Ascending aorta (tissue), 2 donors: ENCODE measurements at regions of chr1 and their contacts with region 1.

Region 1: DNA sequence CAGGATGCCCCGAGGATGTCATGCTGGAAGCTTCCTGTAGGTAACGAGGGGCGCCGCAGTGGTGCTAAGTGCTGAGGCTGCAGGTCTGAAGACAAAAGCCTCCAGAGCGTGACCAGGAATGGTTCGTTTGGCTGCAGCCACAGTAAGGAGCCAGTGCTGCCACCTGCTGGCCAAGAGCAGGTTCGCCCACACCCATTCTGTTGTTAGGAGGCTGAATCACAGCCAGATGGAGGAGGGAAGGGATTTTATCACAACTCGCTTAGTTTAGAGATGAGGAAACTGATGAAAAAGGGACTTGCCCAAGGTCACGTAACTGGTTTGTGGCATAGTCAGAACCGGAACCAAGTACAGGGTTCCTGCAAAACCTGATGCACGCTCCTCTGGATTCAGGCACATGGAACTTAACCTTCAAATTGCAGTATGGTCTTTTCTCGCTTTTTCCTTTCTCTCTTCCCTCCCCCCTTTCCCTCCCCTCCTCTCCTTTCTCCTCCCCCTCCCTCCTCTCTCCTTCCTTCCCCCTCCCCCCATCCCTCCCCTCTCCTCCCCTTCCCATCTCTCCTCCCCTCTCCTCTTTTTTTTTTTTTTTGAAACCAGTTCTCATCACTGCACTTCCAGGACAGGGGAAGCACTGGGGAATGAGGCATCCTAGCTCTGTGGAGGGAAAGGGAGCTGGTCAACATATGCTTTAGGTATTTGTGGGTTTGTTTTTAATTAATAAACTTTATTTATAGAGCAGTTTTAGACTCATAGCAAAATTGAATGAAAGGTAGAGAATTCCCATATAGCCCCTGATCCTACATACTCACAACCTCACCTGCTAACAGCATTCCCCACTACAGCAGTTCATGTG is 81.8 kb downstream of the MPZL1 start:
- DNase-seq: peak; percentile 77 to 97
- H3K4me3 ChIP-seq: no peak overlapping the region
- H3K27ac ChIP-seq: no peak overlapping the region
- H3K4me1 ChIP-seq: peaks cover 0 to 2% of the 10 kb centered on the region in 2 donors
- H3K27me3 ChIP-seq: no peaks in the 10 kb centered on the region
- CTCF ChIP-seq: peak; percentile 91 to 96 (median 91)

Region 2: DNA sequence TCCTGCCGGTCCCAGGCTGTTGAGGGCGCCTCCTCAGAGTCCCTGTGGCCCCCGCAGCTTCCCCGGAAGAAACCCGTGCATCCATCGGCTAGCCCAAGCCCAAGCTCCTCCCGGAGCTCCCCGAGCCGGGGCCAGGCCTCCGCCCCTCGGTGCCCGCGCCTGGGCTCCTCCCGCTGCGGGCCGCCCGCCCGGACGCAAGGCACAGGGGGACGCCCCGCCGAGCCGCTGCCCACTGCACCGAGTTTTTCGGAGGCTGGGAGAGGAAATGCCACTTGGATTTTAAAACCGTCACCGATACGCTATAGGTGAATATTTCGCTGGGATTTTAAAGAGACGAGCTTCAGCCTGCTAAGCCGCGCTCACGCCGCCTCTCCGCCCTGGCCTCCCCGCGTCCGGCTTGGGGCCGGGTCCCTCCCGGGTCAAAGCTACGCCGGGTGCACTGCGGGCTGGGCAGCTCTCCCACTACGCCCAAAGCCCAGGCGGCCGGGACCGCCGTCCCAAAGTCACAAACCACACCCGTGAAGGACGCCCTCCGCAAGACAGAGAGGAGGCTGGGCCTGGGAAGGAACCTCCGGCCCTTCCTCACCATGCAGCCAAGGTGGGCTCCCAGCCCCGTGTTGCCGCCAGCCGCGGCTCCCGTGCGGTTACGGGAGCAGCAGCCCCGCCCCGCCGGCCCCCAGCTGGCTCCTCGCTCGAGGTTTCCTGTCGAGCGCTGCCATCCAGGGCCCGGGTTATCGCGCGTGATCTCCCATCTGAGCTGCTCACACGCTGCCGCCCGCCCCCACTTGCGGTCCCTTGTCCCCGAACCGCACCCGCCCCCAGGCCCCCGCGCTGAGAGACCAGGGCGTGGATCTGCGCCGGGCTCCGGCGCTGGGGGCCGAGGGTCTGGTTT is 348.4 kb before region 1 on chr1:
- intact Hi-C with region 1: loop called (anchors 10 kb)
- DNase-seq: peak in 1 of 2 donors; percentile 84
- H3K4me3 ChIP-seq: peak overlapping the region; percentile 82 to 96
- H3K27ac ChIP-seq: peak overlapping the region; percentile 88 to 91
- H3K4me1 ChIP-seq: peaks cover 0 to 4% of the 10 kb centered on the region in 2 donors
- H3K27me3 ChIP-seq: no peaks in the 10 kb centered on the region
- CTCF ChIP-seq: no peak

Region 3: DNA sequence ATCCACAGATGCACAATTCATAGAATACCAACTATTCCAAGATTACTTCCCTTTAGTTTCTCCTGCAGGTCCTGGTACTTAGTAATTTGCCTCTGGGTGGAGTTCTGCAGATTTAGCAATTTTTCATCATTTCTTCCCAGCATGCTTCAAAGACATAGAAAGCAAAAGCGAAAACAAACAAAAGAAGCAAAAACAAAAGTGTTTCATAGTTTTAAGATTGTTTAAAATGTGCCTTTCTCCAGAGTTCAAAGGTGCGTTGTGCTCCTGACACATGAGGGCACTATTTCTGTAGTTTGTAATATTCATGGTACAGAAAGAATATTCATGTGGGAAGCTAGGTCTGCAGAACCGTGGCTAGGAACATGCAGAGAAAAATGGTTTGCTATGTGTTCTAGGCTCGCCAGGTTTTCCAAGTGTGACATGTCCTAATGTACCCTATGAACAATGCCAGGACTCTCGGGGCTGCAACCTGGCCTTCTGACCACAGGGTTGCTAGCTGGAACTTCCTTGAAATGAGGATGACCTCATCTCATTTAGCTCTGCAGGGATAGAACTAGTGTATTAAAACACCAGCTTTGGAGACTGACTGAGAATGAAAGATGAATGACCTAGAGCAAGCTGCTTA is 203.5 kb before region 1 on chr1:
- intact Hi-C with region 1: loop called (anchors 5 kb)
- DNase-seq: no peak
- H3K4me3 ChIP-seq: no peak overlapping the region
- H3K27ac ChIP-seq: no peak overlapping the region
- H3K4me1 ChIP-seq: no peaks in the 10 kb centered on the region
- H3K27me3 ChIP-seq: no peaks in the 10 kb centered on the region
- CTCF ChIP-seq: peak; percentile 37 to 62 (median 38)

Region 4: GRCh38 chr1:167721617-167722151 is 81.9 kb before region 1 on chr1 and contains the start of gene MPZL1:
- intact Hi-C with region 1: loop called (anchors 1 kb)
- DNase-seq: peak; percentile 71 to 98
- H3K4me3 ChIP-seq: peak within 1 kb of the TSS; percentile 86 to 98
- H3K27ac ChIP-seq: peak within 1 kb of the TSS; percentile 89 to 94
- H3K4me1 ChIP-seq: peaks cover 3 to 25% of the 10 kb centered on the region in 2 donors
- H3K27me3 ChIP-seq: no peaks in the 10 kb centered on the region
- CTCF ChIP-seq: no peak
- total RNA-seq, gene MPZL1: 58.9 TPM

Region 5: GRCh38 chr1:167819849-167820683 is 16.5 kb after region 1 on chr1:
- intact Hi-C with region 1: loop called (anchors 2 kb)
- DNase-seq: peak; percentile 70 to 93
- H3K4me3 ChIP-seq: peak overlapping the region; percentile 38 to 53
- H3K27ac ChIP-seq: peak overlapping the region; percentile 77 to 86
- H3K4me1 ChIP-seq: peaks cover 0 to 8% of the 10 kb centered on the region in 2 donors
- H3K27me3 ChIP-seq: no peaks in the 10 kb centered on the region
- CTCF ChIP-seq: no peak